Activated CD8-positive, alpha-beta T cell treated with anti-CD3 and anti-CD28 coated beads, Interleukin-2, amount 10 ng/mL, durations not matched to agents 7 days and 5 days (primary cell): ENCODE measurements at regions of chr3 and their contacts with region 1.

Region 1: GRCh38 chr3:9932843-9933560 is 632 bp upstream of the CRELD1 start:
- DNase-seq: peak; percentile 90
- ATAC-seq: peak; percentile 82
- H3K4me3 Mint-ChIP-seq: peak overlapping the region; percentile 98
- H3K27ac Mint-ChIP-seq: peak overlapping the region; percentile 97
- H3K4me1 Mint-ChIP-seq: peaks cover 32% of the 10 kb centered on the region
- H3K27me3 Mint-ChIP-seq: no peaks in the 10 kb centered on the region

Region 2: DNA sequence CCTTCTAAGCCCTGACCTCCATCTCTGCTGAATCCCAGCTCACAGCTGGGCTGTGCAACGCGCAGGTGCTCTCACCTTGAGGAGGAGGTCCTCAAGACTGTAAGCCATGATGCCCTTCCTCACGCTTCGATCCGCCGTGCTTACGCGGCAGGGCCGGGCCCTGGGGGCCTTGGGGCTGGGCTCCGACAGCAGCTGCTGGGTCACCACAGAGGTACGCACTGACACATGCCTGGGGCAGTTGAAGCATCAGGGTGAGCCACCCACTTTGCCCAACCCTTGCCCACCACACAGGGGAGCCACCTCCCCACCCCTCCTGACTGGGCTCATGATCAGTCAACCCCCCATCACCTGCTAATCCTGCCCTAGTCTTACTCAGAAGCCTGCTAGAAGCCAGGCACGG is 56.0 kb before region 1 on chr3:
- CTCF ChIA-PET with region 1: no interaction called
- POLR2A ChIA-PET with region 1: no interaction called
- DNase-seq: no peak
- ATAC-seq: no peak
- H3K4me3 Mint-ChIP-seq: no peak overlapping the region
- H3K27ac Mint-ChIP-seq: no peak overlapping the region
- H3K4me1 Mint-ChIP-seq: no peaks in the 10 kb centered on the region
- H3K27me3 Mint-ChIP-seq: peaks cover 8% of the 10 kb centered on the region

Region 3: GRCh38 chr3:9890249-9891071 is 42.5 kb before region 1 on chr3 and contains the start of gene JAGN1:
- CTCF ChIA-PET with region 1: interaction called, 34 read pairs
- POLR2A ChIA-PET with region 1: interaction called, 21 read pairs
- DNase-seq: peak; percentile 93
- ATAC-seq: peak; percentile 91
- H3K4me3 Mint-ChIP-seq: peak within 1 kb of the TSS; percentile 99
- H3K27ac Mint-ChIP-seq: peak within 1 kb of the TSS; percentile 98
- H3K4me1 Mint-ChIP-seq: peaks cover 38% of the 10 kb centered on the region
- H3K27me3 Mint-ChIP-seq: peaks cover 2% of the 10 kb centered on the region
- total RNA-seq, gene JAGN1: 30.2 to 31.0 TPM

Region 4: GRCh38 chr3:9915254-9916141 is 17.5 kb before region 1 on chr3:
- CTCF ChIA-PET with region 1: interaction called, 39 read pairs
- POLR2A ChIA-PET with region 1: interaction called, 5 read pairs
- DNase-seq: peak; percentile 36
- ATAC-seq: peak; percentile 61
- H3K4me3 Mint-ChIP-seq: peak overlapping the region; percentile 64
- H3K27ac Mint-ChIP-seq: no peak overlapping the region
- H3K4me1 Mint-ChIP-seq: peaks cover 20% of the 10 kb centered on the region
- H3K27me3 Mint-ChIP-seq: peaks cover 6% of the 10 kb centered on the region

Region 5: GRCh38 chr3:9951962-9952805 is 19.2 kb after region 1 on chr3 and contains the start of gene PRRT3:
- CTCF ChIA-PET with region 1: interaction called, 46 read pairs
- POLR2A ChIA-PET with region 1: interaction called, 10 read pairs
- DNase-seq: peak; percentile 74
- ATAC-seq: peak; percentile 88
- H3K4me3 Mint-ChIP-seq: peak within 1 kb of the TSS; percentile 78
- H3K27ac Mint-ChIP-seq: peak within 1 kb of the TSS; percentile 68
- H3K4me1 Mint-ChIP-seq: peaks cover 20% of the 10 kb centered on the region
- H3K27me3 Mint-ChIP-seq: no peaks in the 10 kb centered on the region
- total RNA-seq, gene PRRT3: 5.5 to 6.9 TPM

Region 6: GRCh38 chr3:10041034-10041433 is 108.0 kb after region 1 on chr3:
- CTCF ChIA-PET with region 1: no interaction called
- POLR2A ChIA-PET with region 1: no interaction called
- DNase-seq: no peak
- ATAC-seq: no peak
- H3K4me3 Mint-ChIP-seq: no peak overlapping the region
- H3K27ac Mint-ChIP-seq: no peak overlapping the region
- H3K4me1 Mint-ChIP-seq: no peaks in the 10 kb centered on the region
- H3K27me3 Mint-ChIP-seq: no peaks in the 10 kb centered on the region